Calu3 (cell line): ENCODE measurements at regions of chr3 and their contacts with region 1.

Region 1: DNA sequence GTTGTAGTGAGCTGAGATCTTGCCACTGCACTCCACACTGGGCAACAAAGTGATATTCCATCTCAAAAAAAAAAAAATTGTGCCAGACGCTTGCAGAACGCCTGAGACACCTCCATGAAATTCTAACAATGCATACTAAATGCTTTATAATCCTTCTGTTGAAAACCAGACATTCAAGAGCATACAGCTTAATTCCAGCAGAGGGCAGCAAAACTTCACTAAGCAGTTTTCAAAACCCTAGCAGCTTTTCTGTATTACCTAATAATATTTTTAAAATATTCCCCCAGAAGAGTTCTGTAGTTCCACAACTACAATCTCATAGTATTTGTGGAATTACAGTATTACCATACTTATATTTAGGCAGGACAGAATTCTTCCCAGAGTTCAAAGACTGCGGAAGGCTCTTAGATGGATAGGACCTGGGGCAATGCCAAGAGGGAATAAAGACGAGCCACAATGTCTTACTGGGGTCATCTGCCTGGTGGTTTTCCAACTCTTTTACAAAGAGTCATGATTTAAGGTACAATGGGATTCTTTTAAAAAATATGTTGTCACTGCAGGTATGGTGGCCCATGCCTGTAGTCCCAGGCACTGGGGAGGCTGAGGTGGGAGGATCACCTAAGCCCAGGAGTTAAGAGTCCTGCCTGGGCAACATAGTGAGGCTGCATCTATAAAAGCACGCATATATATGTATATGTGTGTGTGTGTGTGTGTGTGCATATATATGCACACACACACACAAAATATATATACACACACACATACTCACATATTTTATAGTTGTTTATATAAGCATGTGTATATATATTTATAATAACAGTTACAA is 19.6 kb upstream of the TASOR start:
- DNase-seq: peak; percentile 46
- H3K4me3 Mint-ChIP-seq: no peak overlapping the region
- H3K27ac Mint-ChIP-seq: no peak overlapping the region
- H3K4me1 Mint-ChIP-seq: peaks cover 6% of the 10 kb centered on the region
- H3K27me3 Mint-ChIP-seq: no peaks in the 10 kb centered on the region
- CTCF ChIP-seq: peak; percentile 47

Region 2: GRCh38 chr3:56737006-56737405 is 34.3 kb after region 1 on chr3:
- CTCF ChIA-PET with region 1: no interaction called
- intact Hi-C with region 1: no loop called
- DNase-seq: no peak
- H3K4me3 Mint-ChIP-seq: no peak overlapping the region
- H3K27ac Mint-ChIP-seq: no peak overlapping the region
- H3K4me1 Mint-ChIP-seq: no peaks in the 10 kb centered on the region
- H3K27me3 Mint-ChIP-seq: no peaks in the 10 kb centered on the region
- CTCF ChIP-seq: no peak

Region 3: DNA sequence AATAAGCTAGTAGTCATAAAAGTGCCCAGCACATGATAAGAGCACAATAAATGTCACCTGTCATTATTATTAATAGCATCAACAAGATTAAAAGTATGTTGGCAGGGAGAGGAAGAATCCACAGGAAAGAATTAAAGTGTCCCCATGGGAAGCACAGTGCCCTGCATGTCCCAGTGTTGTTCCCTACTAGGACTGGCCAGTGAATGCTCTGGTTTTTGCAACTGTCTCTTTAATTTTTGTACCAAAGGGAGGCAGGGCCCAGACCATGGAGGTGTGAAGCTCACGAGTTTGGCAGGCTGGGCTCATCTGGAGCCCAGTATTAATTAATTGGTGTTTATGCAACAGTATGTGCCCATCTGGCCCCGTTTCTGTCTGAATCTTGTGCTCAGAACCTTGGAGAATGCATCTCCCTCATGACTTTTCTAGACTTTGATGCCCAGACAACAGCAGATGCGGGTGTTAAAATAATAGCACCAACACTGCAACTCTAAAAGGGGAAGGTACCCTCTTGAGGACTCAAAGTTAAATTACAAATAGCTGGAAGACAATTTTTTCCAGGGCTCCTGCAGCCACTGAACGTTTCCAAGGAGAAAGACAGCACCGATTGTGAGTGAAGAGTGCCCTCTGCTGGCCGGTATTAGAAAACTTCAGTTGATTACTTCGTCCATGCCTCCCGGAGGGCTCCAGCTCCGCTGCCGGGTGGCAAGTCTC is 285.9 kb after region 1 on chr3:
- CTCF ChIA-PET with region 1: interaction called, 43 read pairs
- intact Hi-C with region 1: loop called (anchors 1 kb)
- DNase-seq: peak; percentile 72
- H3K4me3 Mint-ChIP-seq: no peak overlapping the region
- H3K27ac Mint-ChIP-seq: no peak overlapping the region
- H3K4me1 Mint-ChIP-seq: peaks cover 27% of the 10 kb centered on the region
- H3K27me3 Mint-ChIP-seq: no peaks in the 10 kb centered on the region
- CTCF ChIP-seq: peak; percentile 69

Region 4: GRCh38 chr3:57068437-57069089 is 365.9 kb after region 1 on chr3:
- CTCF ChIA-PET with region 1: no interaction called
- intact Hi-C with region 1: loop called (anchors 10 kb)
- DNase-seq: peak; percentile 70
- H3K4me3 Mint-ChIP-seq: peak overlapping the region; percentile 36
- H3K27ac Mint-ChIP-seq: peak overlapping the region; percentile 78
- H3K4me1 Mint-ChIP-seq: peaks cover 26% of the 10 kb centered on the region
- H3K27me3 Mint-ChIP-seq: no peaks in the 10 kb centered on the region
- CTCF ChIP-seq: no peak